ENCODE measurements at regions of chr14 and their contacts with region 1.

Region 1: DNA sequence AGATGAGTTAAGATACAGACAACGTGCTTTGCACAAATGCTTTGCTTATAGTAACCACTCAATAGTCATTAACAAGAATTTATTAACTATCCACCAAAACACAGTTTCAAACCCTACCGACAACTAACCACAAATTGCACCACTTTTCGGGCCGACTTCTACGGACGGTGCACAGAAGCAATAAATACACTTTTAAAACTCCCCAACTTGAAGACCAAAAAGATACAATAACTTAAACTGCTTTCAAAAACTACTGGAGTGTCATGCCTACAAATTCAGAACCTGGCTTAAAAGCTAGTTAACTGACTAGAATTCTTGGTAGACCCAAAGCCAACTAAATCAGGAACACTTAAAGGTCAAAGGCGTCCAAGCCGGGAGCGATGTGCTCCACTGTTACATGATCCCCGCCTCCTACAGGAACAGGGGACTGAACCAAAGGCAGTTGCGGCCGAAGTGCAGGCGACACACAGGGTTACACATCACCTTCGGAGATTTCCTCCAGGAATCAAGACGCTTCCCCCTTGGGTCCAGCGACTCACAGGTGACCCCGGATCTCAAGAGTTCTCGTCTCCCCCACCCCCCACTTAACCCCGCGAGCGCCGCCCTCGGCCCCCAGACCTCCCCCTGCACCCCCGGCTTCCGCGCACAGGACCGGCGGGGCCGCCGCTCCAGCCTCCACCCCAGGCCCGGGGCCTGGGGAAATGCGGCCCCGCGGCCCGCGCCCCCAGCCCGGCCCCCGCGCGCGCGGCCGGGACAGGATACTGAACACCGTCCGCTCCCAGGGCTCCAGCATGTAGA is 507 bp downstream of the SPTSSA start:
- DNase-seq: no peak

Region 2: DNA sequence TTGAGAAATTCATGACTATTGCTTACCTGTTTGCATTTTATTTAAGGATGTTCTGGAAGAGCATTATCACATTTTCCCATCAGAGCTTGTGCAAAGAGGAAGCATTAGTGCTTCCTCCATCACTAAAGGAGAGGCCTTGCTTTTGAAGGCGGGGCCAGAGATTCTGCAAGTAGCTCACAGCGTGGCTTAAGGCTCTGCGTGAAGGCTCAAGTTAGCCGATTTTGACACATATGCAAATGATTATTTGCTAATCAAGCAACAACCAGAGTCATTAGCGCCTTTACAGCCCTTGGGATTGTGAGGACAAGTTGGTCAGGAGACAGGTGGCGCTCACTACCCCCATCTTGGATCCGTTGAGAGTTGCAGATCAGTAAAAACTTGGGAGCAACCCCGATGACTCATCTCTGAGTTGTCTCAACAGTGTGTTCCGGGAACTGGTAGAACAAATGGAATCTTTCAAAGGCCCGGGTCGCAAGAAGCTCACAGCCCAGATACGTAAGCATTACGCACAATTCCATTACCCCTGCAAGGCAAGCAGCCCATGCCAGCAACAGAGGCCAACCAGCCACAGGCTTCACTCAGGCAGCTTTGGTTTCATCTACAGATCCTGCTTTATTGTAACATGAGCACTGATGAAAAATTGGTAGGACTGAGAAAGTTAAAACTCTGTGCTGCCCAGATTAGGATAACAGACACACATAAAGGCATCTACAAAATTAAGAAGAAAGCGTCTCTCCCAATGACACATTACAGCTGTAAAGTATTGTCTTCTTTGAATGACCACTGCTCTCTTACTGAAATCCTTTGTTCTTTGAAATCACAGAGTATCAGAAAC is 35.4 kb after region 1 on chr14:
- intact Hi-C with region 1: loop called in 1 of 2 experiments (anchors 5 kb)
- DNase-seq: peak; percentile 95

Region 3: GRCh38 chr14:34604995-34605394 is 143.5 kb after region 1 on chr14:
- intact Hi-C with region 1: no loop called
- DNase-seq: no peak

Measured in posterior vena cava (tissue), 2 donors.